Activated CD8-positive, alpha-beta memory T cell treated with anti-CD3 and anti-CD28 coated beads, Interleukin-2, amount 10 ng/mL, durations not matched to agents 7 days and 5 days (primary cell): ENCODE measurements at regions of chr10 and their contacts with region 1.

Region 1: GRCh38 chr10:103244663-103245271 is 920 bp upstream of the RPEL1 start:
- DNase-seq: peak; percentile 66
- ATAC-seq: peak; percentile 73
- H3K4me3 Mint-ChIP-seq: no peak overlapping the region
- H3K27ac Mint-ChIP-seq: no peak overlapping the region
- H3K4me1 Mint-ChIP-seq: peaks cover 21% of the 10 kb centered on the region
- H3K27me3 Mint-ChIP-seq: peaks cover 14% of the 10 kb centered on the region

Region 2: GRCh38 chr10:102835007-102835482 is 409.7 kb before region 1 on chr10:
- CTCF ChIA-PET with region 1: interaction called, 23 read pairs
- DNase-seq: peak; percentile 80
- ATAC-seq: peak; percentile 97
- H3K4me3 Mint-ChIP-seq: no peak overlapping the region
- H3K27ac Mint-ChIP-seq: no peak overlapping the region
- H3K4me1 Mint-ChIP-seq: no peaks in the 10 kb centered on the region
- H3K27me3 Mint-ChIP-seq: peaks cover 13% of the 10 kb centered on the region

Region 3: DNA sequence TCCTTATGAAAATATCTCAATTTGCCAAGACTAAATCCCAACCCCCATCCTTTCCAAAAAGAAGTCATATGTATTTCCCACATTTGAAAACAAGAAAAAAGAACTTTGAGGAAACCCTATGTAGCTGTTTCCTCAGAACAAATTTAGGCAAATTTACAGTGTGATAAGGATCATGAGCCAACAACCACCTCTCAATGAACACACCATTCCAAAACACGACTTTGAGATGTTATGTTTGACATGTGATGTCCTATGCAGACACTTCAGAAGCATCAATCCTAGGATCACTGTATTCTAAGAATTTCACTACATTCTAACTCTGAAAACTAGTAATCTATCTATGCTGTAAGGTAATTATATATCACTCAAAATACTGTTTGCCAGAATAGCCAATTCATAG is 113.9 kb before region 1 on chr10:
- CTCF ChIA-PET with region 1: no interaction called
- DNase-seq: no peak
- ATAC-seq: no peak
- H3K4me3 Mint-ChIP-seq: no peak overlapping the region
- H3K27ac Mint-ChIP-seq: no peak overlapping the region
- H3K4me1 Mint-ChIP-seq: peaks cover 16% of the 10 kb centered on the region
- H3K27me3 Mint-ChIP-seq: no peaks in the 10 kb centered on the region

Region 4: GRCh38 chr10:103192451-103193106 is 52.2 kb before region 1 on chr10:
- CTCF ChIA-PET with region 1: interaction called, 19 read pairs
- DNase-seq: peak; percentile 88
- ATAC-seq: peak; percentile 62
- H3K4me3 Mint-ChIP-seq: peak overlapping the region; percentile 98
- H3K27ac Mint-ChIP-seq: peak overlapping the region; percentile 99
- H3K4me1 Mint-ChIP-seq: peaks cover 39% of the 10 kb centered on the region
- H3K27me3 Mint-ChIP-seq: no peaks in the 10 kb centered on the region